Left colon (tissue), 2 donors: ENCODE measurements at regions of chr17 and their contacts with region 1.

Region 1: DNA sequence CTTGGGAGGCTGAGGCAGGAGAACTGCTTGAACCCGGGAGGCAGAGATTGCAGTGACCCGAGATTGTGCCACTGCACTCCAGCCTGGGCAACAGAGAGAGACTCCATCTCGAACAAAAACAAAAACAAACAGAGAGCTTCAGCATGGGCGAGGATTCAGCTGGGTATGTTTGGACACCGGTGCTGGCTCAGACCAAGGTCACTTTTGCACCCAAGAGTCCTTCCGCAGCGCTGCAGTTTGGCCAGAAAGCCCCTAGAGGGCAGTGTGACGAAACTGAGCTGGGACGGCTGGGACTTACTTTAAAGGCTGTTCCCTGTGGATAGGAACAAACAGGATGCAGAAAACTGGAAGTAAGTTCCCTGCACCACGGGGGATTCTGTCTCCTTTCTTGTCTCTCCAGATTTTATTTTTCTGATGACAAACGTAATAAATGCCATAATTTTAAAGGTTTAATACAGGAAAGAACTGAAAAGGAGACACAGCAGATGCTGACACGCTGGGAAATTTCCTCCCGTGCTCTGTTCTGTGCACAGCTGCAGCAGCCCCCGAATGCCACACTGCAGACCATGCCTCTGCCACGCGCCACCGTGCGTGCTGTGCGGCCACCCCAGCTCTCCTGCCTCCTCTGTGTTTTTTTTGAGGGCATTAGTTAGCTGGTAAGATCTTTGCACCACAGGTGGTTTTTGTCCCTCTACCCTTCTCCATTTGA is 25.2 kb upstream of the USP36 start:
- DNase-seq: peak; percentile 57 to 81
- ATAC-seq: peak; percentile 83

Region 2: DNA sequence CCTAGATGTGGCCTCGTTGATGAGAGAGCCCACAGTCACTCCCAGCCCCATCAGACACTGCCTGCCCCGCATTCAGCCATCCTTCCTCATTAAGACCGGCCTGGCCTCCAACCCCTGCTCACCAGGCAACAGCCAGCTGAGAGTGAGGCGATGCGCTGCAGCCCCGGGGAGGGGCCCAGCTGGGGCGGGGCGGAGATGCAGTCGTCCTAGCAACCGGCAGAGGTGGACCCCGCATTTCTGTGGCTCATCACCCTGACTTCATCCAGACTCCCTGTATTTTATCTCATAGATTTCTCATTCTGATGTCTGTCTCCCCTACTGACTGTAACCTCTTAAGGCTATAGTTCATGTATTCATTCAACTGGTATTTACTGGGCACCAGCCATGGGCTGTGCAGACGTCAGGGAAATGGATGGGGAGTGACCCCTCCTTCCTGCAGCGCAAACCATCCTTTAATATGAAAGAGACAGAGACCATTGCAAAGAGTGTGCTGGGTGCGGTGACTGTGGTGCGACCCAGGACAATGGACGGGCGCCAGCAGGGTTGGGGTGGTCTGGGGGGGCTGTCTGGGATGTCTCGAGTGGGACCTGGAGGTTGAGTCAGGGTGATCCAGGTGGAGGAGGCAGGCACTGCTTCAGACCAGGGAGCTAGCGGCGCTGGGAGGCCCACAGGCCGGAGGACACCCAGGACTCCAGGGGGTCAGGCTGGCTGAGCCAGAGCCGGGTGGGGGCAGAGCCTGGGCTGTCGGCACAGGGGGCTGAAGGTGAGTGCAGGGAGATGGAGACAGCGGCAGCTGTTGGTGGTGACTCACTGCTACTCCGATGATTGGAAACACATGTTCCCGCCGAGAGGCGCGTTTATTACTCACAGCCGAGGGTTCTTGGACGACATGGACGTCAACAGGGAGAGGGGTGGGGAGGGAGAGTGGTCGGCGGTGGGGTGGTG is 69.8 kb after region 1 on chr17:
- intact Hi-C with region 1: no loop called
- DNase-seq: peak in 1 of 2 donors; percentile 68
- ATAC-seq: no peak

Region 3: GRCh38 chr17:78970834-78971773 is 105.3 kb after region 1 on chr17:
- intact Hi-C with region 1: loop called (anchors 5 to 10 kb)
- DNase-seq: peak; percentile 70 to 92
- ATAC-seq: peak; percentile 45